Panc1 (cell line): ENCODE measurements at regions of chr5 and their contacts with region 1.

Region 1: GRCh38 chr5:99369797-99370593 is 441.2 kb upstream of the CHD1 start:
- DNase-seq: no peak
- ATAC-seq: no peak
- H3K4me3 ChIP-seq: no peak overlapping the region
- H3K27ac ChIP-seq: no peak overlapping the region
- H3K4me1 ChIP-seq: no peaks in the 10 kb centered on the region
- H3K27me3 ChIP-seq: no peaks in the 10 kb centered on the region
- CTCF ChIP-seq: no peak

Region 2: GRCh38 chr5:99441235-99441634 is 71.2 kb after region 1 on chr5:
- CTCF ChIA-PET with region 1: no interaction called
- POLR2A ChIA-PET with region 1: interaction called, 19 read pairs
- in situ Hi-C with region 1: no loop called
- intact Hi-C with region 1: no loop called
- DNase-seq: no peak
- ATAC-seq: no peak
- H3K4me3 ChIP-seq: no peak overlapping the region
- H3K27ac ChIP-seq: no peak overlapping the region
- H3K4me1 ChIP-seq: no peaks in the 10 kb centered on the region
- H3K27me3 ChIP-seq: no peaks in the 10 kb centered on the region
- CTCF ChIP-seq: no peak